Adrenal gland (tissue), 19 donors: ENCODE measurements at regions of chr15 and their contacts with region 1.

Region 1: GRCh38 chr15:23857028-23857641 is 170.0 kb upstream of the NDN start:
- DNase-seq: peak; percentile 38 to 74 (median 58)
- H3K4me3 ChIP-seq: no peak overlapping the region
- H3K27ac ChIP-seq: no peak overlapping the region
- H3K4me1 ChIP-seq: no peaks in the 10 kb centered on the region
- H3K27me3 ChIP-seq: no peaks in the 10 kb centered on the region
- CTCF ChIP-seq: peak; percentile 23 to 49 (median 44)
- POLR2A ChIP-seq: no peak

Region 2: GRCh38 chr15:23616536-23616935 is 240.6 kb before region 1 on chr15:
- intact Hi-C with region 1: no loop called
- DNase-seq: no peak
- H3K4me3 ChIP-seq: no peak overlapping the region
- H3K27ac ChIP-seq: no peak overlapping the region
- H3K4me1 ChIP-seq: no peaks in the 10 kb centered on the region
- H3K27me3 ChIP-seq: no peaks in the 10 kb centered on the region
- CTCF ChIP-seq: no peak
- POLR2A ChIP-seq: no peak

Region 3: DNA sequence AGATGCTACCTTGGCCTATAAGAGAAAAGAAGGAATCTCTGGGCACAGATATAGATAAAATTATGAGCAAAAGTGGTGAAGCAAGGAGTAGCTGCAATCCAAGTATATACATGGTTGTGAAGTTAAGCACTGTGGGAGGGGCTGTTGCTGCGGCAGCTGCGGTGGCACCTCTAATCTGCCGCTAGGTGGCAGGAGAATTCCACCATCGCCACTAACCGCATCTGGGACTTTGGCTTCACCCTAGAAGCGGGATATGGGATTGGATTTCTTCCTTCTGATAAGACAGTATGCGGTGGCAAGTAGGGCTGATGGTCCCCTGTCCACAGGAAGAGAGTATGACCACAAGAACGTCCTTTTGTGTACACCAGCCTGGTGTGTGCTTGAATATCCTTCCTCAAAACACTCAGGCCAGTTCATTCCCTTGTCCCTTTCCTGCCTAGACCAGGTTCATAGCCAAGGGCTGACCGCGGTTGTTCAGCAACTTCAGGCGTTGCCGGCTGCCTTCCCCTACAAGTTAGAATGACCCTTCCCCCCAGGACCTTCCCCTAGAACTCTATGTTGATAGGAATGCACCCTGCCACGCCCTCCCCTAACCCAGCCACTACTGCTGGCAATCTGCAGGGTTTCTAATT is 214.6 kb before region 1 on chr15:
- intact Hi-C with region 1: loop called (anchors 5 kb)
- DNase-seq: peak; percentile 44 to 74 (median 66)
- H3K4me3 ChIP-seq: no peak overlapping the region
- H3K27ac ChIP-seq: no peak overlapping the region
- H3K4me1 ChIP-seq: no peaks in the 10 kb centered on the region
- H3K27me3 ChIP-seq: peaks cover 10% of the 10 kb centered on the region
- CTCF ChIP-seq: peak; percentile 71 to 87 (median 79)
- POLR2A ChIP-seq: no peak

Region 4: GRCh38 chr15:23648920-23649515 is 208.1 kb before region 1 on chr15:
- intact Hi-C with region 1: loop called (anchors 5 kb)
- DNase-seq: peak in 5 of 7 donors; percentile 20 to 46 (median 33)
- H3K4me3 ChIP-seq: no peak overlapping the region
- H3K27ac ChIP-seq: no peak overlapping the region
- H3K4me1 ChIP-seq: no peaks in the 10 kb centered on the region
- H3K27me3 ChIP-seq: peaks cover 10% of the 10 kb centered on the region
- CTCF ChIP-seq: peak; percentile 22 to 61 (median 46)
- POLR2A ChIP-seq: no peak